HepG2 (cell line): ENCODE measurements at regions of chr6 and their contacts with region 1.

Region 1: GRCh38 chr6:35146453-35146852 is 5.3 kb upstream of the TCP11 start:
- DNase-seq: peak; percentile 63
- ATAC-seq: peak; percentile 92
- H3K4me3 ChIP-seq: no peak overlapping the region
- H3K27ac ChIP-seq: no peak overlapping the region
- H3K4me1 ChIP-seq: peaks cover 19% of the 10 kb centered on the region
- H3K27me3 ChIP-seq: peaks cover 0 to 19% of the 10 kb centered on the region in 2 experiments; a peak in 3 of 5 replicates
- CTCF ChIP-seq: peak; percentile 93
- EP300 ChIP-seq: no peak
- POLR2A ChIP-seq: no peak
- RAD21 ChIP-seq: peak; percentile 92

Region 2: GRCh38 chr6:35161776-35162607 is 15.5 kb after region 1 on chr6:
- CTCF ChIA-PET with region 1: no interaction called
- POLR2A ChIA-PET with region 1: no interaction called
- in situ Hi-C with region 1: no loop called
- intact Hi-C with region 1: loop called (anchors 2 kb)
- DNase-seq: peak; percentile 75
- ATAC-seq: peak; percentile 84
- H3K4me3 ChIP-seq: peak overlapping the region in 2 of 3 experiments; percentile 3 to 28; a peak in 3 of 6 replicates
- H3K27ac ChIP-seq: peak overlapping the region; percentile 57
- H3K4me1 ChIP-seq: peaks cover 68% of the 10 kb centered on the region
- H3K27me3 ChIP-seq: peaks cover 0 to 5% of the 10 kb centered on the region in 2 experiments; a peak in 3 of 5 replicates
- CTCF ChIP-seq: no peak
- EP300 ChIP-seq: peak in 1 of 2 experiments; percentile 27; a peak in 1 of 4 replicates
- POLR2A ChIP-seq: no peak
- RAD21 ChIP-seq: no peak

Region 3: GRCh38 chr6:35209081-35209480 is 62.6 kb after region 1 on chr6:
- CTCF ChIA-PET with region 1: interaction called, 67 read pairs
- POLR2A ChIA-PET with region 1: interaction called, 4 read pairs
- in situ Hi-C with region 1: loop called (anchors 5 kb)
- intact Hi-C with region 1: loop called (anchors 1 kb)
- DNase-seq: no peak
- ATAC-seq: no peak
- H3K4me3 ChIP-seq: no peak overlapping the region
- H3K27ac ChIP-seq: no peak overlapping the region
- H3K4me1 ChIP-seq: 0 out of 2 replicates have a peak, but pooled peaks cover 7% of the 10 kb centered on the region
- H3K27me3 ChIP-seq: peaks cover 8 to 36% of the 10 kb centered on the region in 2 experiments; a peak in 4 of 5 replicates
- CTCF ChIP-seq: no peak
- EP300 ChIP-seq: no peak
- POLR2A ChIP-seq: no peak
- RAD21 ChIP-seq: no peak

Region 4: GRCh38 chr6:35240840-35241801 is 94.7 kb after region 1 on chr6:
- CTCF ChIA-PET with region 1: interaction called, 61 read pairs
- POLR2A ChIA-PET with region 1: no interaction called
- in situ Hi-C with region 1: loop called (anchors 5 kb)
- intact Hi-C with region 1: loop called (anchors 1 kb)
- DNase-seq: peak; percentile 59
- ATAC-seq: peak; percentile 93
- H3K4me3 ChIP-seq: no peak overlapping the region
- H3K27ac ChIP-seq: no peak overlapping the region
- H3K4me1 ChIP-seq: no peaks in the 10 kb centered on the region
- H3K27me3 ChIP-seq: no peaks in the 10 kb centered on the region
- CTCF ChIP-seq: peak; percentile 99
- EP300 ChIP-seq: no peak
- POLR2A ChIP-seq: no peak
- RAD21 ChIP-seq: peak; percentile 97